ENCODE measurements at regions of chr5 and their contacts with region 1.

Region 1: DNA sequence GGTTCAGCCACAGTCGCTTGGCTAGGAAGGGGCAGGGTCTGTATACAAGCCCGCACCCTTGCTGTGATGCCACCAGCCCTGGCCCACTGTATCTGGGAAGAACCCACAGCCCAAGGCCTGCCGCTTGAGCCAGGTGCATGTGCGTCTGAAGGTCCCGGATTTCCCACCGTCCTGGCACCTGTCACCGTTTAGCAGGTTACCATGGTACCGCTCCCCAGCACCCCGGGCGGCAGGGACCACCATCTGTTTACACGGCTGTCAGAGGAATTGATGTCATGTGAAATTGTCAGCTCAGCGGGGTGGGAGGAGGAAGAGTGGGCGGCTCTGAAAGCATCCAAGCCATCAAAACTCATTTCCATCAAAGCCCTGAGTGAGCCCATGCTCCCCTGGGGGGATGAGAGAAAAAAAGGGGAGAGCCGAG is 92.7 kb downstream of the HRH2 start:
- DNase-seq: no peak
- ATAC-seq: no peak

Region 2: DNA sequence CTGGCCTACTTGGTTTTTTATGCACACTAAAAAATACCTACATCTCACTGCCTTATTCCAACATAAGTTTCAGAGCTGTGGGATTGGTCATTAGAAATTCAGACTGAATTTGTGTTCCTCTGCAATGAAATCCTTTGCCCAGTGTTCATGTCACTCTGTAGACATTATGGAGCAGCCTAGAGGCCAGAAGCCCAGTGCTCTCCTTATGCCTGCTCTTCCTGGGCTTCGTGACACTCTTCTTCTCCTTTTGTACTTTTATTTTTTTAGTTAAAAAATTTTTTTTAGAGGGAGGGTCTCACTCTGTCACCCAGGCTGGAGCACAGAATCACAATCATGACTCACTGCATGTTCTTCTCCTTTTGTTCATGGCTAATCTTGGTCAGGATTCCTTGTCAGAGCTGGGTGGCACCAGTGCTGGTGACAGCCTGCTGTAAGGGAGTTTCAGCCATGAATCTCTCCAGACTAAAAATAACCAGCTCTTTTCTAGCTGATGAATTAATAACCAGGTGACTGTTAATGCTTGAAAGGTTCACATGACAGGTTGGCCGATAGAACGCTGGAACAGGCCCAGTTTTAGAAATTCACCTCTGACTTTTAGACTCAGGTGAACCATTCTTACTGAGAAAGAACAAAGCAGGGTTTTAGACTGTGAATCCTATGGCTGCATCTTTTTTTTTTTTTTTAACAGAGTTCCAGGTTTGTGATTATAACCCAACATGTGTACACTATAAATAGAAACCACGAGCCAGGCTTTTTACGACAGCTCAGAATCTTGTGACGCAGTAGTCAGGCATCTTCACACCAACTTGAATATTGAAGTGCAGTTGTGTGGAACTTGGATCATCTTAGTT is 1795.6 kb before region 1 on chr5:
- intact Hi-C with region 1: no loop called
- DNase-seq: no peak
- ATAC-seq: no peak

Region 3: GRCh38 chr5:175710326-175710725 is 40.2 kb before region 1 on chr5:
- intact Hi-C with region 1: loop called (anchors 2 kb)
- DNase-seq: peak; percentile 23
- ATAC-seq: no peak